Ovary (tissue), 10 donors: ENCODE measurements at regions of chr7 and their contacts with region 1.

Region 1: GRCh38 chr7:54419209-54419608 is 123.0 kb upstream of the VSTM2A start:
- DNase-seq: no peak
- H3K4me3 ChIP-seq: no peak overlapping the region
- H3K27ac ChIP-seq: no peak overlapping the region
- H3K4me1 ChIP-seq: no peaks in the 10 kb centered on the region
- H3K27me3 ChIP-seq: no peaks in the 10 kb centered on the region
- CTCF ChIP-seq: no peak
- EP300 ChIP-seq: no peak
- POLR2A ChIP-seq: no peak

Region 2: GRCh38 chr7:54354436-54354835 is 64.8 kb before region 1 on chr7:
- intact Hi-C with region 1: loop called in 1 of 4 experiments (anchors 10 kb)
- DNase-seq: no peak
- H3K4me3 ChIP-seq: no peak overlapping the region
- H3K27ac ChIP-seq: no peak overlapping the region
- H3K4me1 ChIP-seq: no peaks in the 10 kb centered on the region
- H3K27me3 ChIP-seq: no peaks in the 10 kb centered on the region
- CTCF ChIP-seq: no peak
- EP300 ChIP-seq: no peak
- POLR2A ChIP-seq: no peak

Region 3: DNA sequence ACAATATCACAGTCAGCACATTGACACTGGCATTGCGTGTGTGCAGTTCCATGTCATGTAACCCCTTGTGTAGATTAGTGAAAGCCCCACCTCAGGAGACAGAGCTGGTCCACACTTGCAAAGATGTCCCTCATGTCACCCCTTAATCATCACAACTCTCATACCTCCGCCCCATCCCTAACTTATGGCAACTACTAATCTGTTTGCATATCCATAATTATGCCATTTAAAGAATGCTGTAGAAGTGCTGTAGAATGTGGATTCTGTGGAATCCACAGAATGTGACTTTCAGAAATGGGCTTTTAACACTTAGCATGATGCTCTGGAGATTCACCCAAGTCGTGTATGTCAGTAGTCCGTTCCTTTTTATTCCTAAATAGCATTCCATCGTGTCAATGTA is 20.2 kb after region 1 on chr7:
- intact Hi-C with region 1: no loop called
- DNase-seq: no peak
- H3K4me3 ChIP-seq: no peak overlapping the region
- H3K27ac ChIP-seq: no peak overlapping the region
- H3K4me1 ChIP-seq: no peaks in the 10 kb centered on the region
- H3K27me3 ChIP-seq: no peaks in the 10 kb centered on the region
- CTCF ChIP-seq: no peak
- EP300 ChIP-seq: no peak
- POLR2A ChIP-seq: no peak

Region 4: DNA sequence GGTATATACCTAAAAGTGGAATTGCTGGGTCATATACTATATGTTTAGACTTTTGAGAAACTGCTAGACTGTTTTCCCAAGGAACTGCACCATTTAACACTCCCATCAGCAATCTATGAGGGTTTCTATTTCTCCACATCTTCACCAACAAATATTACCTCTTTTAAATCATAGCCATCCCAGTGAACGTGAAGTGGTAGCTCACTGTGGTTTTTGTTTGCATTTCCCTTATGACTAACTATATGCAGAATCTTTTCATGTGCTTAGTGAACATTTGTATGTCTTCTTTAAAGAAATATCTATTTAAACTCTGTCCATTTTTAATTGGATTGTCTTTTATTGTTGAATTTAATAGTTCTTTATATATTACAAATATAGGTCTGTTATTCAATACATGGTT is 455.6 kb after region 1 on chr7:
- intact Hi-C with region 1: no loop called
- DNase-seq: no peak
- H3K4me3 ChIP-seq: no peak overlapping the region
- H3K27ac ChIP-seq: no peak overlapping the region
- H3K4me1 ChIP-seq: no peaks in the 10 kb centered on the region
- H3K27me3 ChIP-seq: no peaks in the 10 kb centered on the region
- CTCF ChIP-seq: no peak
- EP300 ChIP-seq: no peak
- POLR2A ChIP-seq: no peak